ENCODE measurements at regions of chr6 and their contacts with region 1.

Region 1: GRCh38 chr6:15327271-15327670 is 81.4 kb downstream of the JARID2 start:
- DNase-seq: peak; percentile 66
- H3K4me3 Mint-ChIP-seq: peak overlapping the region; percentile 1
- H3K27ac Mint-ChIP-seq: peak overlapping the region; percentile 67
- H3K4me1 Mint-ChIP-seq: peaks cover 85% of the 10 kb centered on the region
- H3K27me3 Mint-ChIP-seq: no peaks in the 10 kb centered on the region

Region 2: DNA sequence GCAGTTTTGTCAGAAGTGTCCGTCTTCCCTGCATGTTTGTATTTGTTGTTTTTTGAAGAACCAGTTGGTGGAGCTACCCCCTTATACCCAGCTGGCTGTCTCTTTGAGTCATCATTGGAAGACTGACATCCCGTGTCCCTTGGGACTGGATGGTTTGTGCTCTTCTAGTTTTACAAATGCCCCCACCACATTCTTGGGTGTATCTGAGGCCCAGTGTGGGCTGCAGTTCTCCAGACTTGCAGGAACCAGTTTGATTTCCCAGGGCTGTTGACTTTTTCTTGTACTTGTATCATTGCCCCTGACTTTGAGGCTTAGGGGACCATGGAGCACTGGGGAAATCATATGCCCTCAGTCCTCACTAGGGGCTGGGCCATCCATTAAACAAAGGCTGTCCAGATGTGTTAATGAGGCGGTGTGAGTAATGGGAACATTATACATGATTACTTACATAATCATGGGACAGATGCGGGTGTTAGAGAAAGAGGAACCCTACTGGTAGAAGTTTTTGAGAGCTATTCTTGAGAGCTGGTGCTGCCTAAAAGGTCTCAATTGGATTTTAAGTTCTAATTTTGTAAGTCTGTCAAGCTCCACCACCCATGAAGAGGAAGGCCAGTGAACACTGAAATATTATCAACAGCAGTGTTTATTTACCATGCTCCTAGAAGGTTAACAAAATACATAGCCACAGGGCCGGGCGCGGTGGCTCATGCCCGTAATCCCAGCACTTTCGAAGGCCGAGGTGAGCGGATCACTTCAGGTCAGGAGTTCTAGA is 73.0 kb before region 1 on chr6:
- CTCF ChIA-PET with region 1: no interaction called
- POLR2A ChIA-PET with region 1: interaction called, 3 read pairs
- intact Hi-C with region 1: loop called (anchors 5 kb)
- DNase-seq: no peak
- H3K4me3 Mint-ChIP-seq: peak overlapping the region; percentile 96
- H3K27ac Mint-ChIP-seq: peak overlapping the region; percentile 98
- H3K4me1 Mint-ChIP-seq: peaks cover 93% of the 10 kb centered on the region
- H3K27me3 Mint-ChIP-seq: no peaks in the 10 kb centered on the region

Region 3: DNA sequence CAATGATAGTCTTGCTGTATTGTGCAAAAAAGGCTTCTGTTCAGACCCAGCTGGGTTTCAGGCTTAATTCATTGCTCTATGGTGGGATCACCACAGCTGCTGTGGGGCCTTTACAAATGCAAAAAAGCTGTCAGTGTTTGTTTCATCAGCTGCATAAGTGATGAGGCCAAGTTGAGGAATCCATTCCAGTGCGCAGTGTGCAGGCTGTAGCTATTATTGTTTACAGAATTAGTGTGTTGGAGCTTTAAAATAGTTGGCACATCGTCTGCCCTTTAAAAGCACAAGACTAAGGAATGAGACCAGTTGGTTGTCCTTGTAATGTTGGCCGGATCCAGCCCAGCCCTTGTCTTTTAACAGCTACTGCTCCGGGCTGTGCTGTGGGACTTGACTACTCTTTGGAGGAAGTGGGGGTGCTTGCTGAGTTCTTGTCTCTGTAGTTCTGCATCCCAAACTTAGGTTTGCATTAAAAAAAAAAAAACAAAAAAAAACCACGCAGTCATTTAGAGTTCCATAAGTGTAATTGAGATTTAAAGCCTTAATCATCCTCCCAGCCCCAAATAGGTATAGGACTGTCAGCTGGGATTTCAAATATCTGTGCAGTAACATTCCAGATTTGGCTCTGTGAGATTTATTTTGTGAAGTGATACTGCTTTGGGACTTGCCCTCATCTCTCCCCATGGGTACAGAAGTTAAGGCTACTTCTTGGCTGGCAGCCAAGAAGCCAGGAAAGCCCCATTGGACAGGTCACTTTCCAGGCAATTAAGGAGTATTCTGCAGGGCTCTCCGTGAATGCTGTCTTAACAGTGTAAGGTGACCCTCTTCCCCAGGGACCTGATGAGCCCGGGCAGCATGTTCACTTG is 62.1 kb before region 1 on chr6:
- CTCF ChIA-PET with region 1: no interaction called
- POLR2A ChIA-PET with region 1: no interaction called
- intact Hi-C with region 1: no loop called
- DNase-seq: no peak
- H3K4me3 Mint-ChIP-seq: no peak overlapping the region
- H3K27ac Mint-ChIP-seq: no peak overlapping the region
- H3K4me1 Mint-ChIP-seq: peaks cover 93% of the 10 kb centered on the region
- H3K27me3 Mint-ChIP-seq: no peaks in the 10 kb centered on the region

Region 4: GRCh38 chr6:15420959-15421438 is 93.7 kb after region 1 on chr6:
- CTCF ChIA-PET with region 1: no interaction called
- POLR2A ChIA-PET with region 1: no interaction called
- intact Hi-C with region 1: loop called (anchors 5 kb)
- DNase-seq: no peak
- H3K4me3 Mint-ChIP-seq: peak overlapping the region; percentile 40
- H3K27ac Mint-ChIP-seq: peak overlapping the region; percentile 81
- H3K4me1 Mint-ChIP-seq: peaks cover 62% of the 10 kb centered on the region
- H3K27me3 Mint-ChIP-seq: no peaks in the 10 kb centered on the region

Region 5: GRCh38 chr6:15491255-15491985 is 164.1 kb after region 1 on chr6:
- CTCF ChIA-PET with region 1: no interaction called
- POLR2A ChIA-PET with region 1: no interaction called
- intact Hi-C with region 1: loop called (anchors 5 kb)
- DNase-seq: peak; percentile 84
- H3K4me3 Mint-ChIP-seq: no peak overlapping the region
- H3K27ac Mint-ChIP-seq: peak overlapping the region; percentile 76
- H3K4me1 Mint-ChIP-seq: peaks cover 35% of the 10 kb centered on the region
- H3K27me3 Mint-ChIP-seq: no peaks in the 10 kb centered on the region

Region 6: DNA sequence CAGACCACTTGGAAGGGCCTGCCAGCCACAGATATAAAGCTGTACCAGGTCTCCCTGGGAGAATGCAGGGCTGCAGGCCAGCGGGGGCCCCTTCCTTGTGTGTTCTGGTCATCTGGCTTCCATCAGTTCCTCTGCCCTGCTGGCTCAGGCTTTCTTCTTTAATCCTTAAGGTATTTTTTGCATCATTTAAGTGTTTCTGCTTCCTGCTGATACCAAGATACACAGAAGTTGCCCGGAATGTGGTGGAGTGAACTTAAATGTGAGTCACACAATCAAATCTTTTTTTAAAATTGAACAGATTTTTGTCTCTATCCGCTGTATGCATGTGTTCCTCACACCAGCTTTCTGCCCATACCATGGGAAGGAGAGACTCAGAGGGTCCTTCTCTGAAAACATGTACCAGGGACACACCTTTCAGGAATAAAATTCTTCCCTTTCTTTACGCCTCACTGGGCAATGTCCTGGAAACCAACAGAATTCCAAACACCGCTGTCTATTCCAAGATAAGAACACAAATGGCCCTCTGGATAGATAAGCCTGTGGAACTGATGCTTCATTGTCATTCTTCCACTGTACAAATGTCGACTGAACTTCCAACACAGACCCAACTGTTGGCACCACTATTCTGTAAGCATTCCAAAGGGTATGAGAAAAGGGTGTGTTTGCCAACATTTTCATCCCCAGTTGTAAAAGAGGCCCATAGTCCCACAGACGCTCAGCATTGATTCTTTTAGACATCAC is 595.4 kb after region 1 on chr6:
- CTCF ChIA-PET with region 1: no interaction called
- POLR2A ChIA-PET with region 1: no interaction called
- intact Hi-C with region 1: no loop called
- DNase-seq: no peak
- H3K4me3 Mint-ChIP-seq: no peak overlapping the region
- H3K27ac Mint-ChIP-seq: no peak overlapping the region
- H3K4me1 Mint-ChIP-seq: no peaks in the 10 kb centered on the region
- H3K27me3 Mint-ChIP-seq: peaks cover 7% of the 10 kb centered on the region